Adrenal gland (tissue), 19 donors: ENCODE measurements at regions of chr11 and their contacts with region 1.

Region 1: GRCh38 chr11:118924591-118925585 is 838 bp downstream of the BCL9L start:
- DNase-seq: peak in 5 of 7 donors; percentile 53 to 74 (median 58)
- H3K4me3 ChIP-seq: peak overlapping the region; percentile 74 to 96 (median 84)
- H3K27ac ChIP-seq: peak overlapping the region; percentile 87 to 98 (median 97)
- H3K4me1 ChIP-seq: peaks cover 44 to 49% of the 10 kb centered on the region in 2 donors
- H3K27me3 ChIP-seq: no peaks in the 10 kb centered on the region
- CTCF ChIP-seq: no peak
- POLR2A ChIP-seq: no peak

Region 2: GRCh38 chr11:118907051-118908042 is 17.5 kb before region 1 on chr11:
- intact Hi-C with region 1: loop called in 1 of 2 experiments (anchors 2 kb)
- DNase-seq: peak; percentile 83 to 96 (median 89)
- H3K4me3 ChIP-seq: no peak overlapping the region
- H3K27ac ChIP-seq: peak overlapping the region in 4 of 5 donors; percentile 15 to 98 (median 65)
- H3K4me1 ChIP-seq: peaks cover 36 to 49% of the 10 kb centered on the region in 2 donors
- H3K27me3 ChIP-seq: no peaks in the 10 kb centered on the region
- CTCF ChIP-seq: peak; percentile 82 to 99 (median 96)
- POLR2A ChIP-seq: peak in 1 of 2 donors; percentile 15